ENCODE measurements at regions of chr1 and their contacts with region 1.

Region 1: DNA sequence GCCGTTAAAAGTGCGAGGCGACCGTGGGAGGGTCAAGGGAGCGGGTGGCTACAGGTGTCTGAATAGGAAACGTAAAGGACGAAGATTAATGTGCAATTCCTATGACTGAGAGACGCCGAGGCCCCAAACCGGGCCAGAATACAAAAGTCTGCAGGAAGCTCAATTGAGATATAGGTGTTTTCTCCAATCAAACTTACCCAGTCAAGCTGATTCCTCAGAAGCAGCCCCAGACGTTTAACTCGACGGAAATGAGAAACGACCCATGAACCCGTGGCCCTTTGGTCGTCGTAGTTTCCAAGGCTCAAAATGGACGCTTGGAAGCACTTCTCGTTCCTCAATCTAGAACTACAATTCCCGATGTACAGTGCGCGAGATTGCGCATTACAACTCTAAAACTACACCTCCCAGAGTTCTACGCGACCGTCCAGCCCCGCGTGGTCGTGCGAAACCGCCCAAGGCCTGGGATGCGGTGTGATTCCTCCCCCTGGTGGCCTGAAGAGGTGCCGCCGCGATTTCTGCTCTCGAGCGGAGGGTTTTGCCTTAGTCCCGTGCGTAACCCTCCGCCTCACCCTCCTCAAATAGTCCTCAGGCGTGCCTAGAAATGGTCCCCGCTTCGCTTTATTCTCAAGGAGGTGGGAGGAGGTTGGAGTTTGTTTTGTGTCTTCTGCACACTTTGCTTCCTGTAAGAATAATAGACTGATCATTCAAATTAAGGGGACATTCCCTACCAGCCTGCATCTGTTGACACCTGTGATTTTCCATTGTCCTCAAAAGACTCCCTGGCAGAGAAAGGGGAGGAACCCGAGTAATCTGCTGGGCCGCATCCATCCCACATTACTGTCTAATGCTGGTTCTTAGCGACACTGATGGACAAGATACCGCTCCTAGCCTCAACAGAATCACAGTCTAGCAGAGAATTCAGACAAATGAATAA is at the start of gene PAFAH2:
- DNase-seq: peak; percentile 99
- total RNA-seq, gene PAFAH2: 7.2 to 7.7 TPM

Region 2: DNA sequence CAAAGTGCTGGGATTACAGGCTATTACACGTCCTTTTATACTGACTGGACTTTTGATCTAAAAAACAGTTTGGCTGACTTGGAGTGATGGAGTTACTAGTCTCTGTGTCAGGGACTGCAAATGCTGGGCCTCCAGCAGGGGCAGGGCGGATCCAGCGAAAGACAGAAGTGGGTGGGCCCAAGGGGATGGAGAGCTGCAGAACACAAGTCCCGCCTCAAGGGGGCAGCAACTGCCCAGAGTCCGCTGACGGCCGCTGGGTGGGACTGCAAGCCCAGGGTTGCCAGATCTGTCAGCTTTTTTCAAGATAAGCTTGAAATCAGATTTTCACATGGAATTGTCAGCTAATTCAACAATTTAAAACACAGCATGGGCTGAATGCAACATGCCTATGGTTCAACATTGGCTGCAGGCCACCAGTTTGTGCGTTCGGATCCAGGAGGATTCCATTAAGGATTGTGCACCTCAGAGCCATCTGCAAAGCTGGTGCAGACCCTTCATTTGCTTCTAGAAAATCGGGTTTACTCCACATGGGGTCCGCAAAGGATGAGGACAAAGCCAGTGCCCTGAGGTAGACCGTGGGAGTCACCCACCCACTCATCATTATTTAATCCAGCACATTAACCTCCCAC is 102.6 kb before region 1 on chr1:
- intact Hi-C with region 1: loop called (anchors 5 kb)
- DNase-seq: peak; percentile 97

Region 3: GRCh38 chr1:26021647-26022403 is 23.7 kb after region 1 on chr1 and contains the start of gene EXTL1:
- intact Hi-C with region 1: loop called in 1 of 2 experiments (anchors 1 kb)
- DNase-seq: no peak
- total RNA-seq, gene EXTL1: 1.7 TPM in 1 of 2 donors, not detected in the other

Measured in posterior vena cava (tissue), 2 donors.